ENCODE measurements at regions of chr7 and their contacts with region 1.

Region 1: DNA sequence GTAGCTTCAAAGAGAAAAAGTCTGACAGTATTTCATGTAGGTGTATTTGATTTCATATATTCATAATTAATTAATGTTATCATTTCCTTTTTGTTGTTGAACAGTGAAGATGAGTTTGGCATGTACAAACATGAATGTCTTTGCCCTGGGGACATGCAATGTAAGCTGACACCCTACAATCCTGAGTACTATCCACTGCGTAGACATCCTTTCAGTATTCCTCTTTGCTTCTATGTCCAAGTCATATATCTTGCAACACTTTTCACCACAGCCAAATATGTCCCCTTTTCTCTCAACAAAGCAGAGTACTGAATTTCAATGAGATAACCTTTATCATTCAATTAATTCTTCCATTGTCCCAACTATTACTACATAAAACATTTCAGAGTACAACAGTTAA is 93.6 kb downstream of the GPR37 start:
- DNase-seq: no peak
- ATAC-seq: no peak
- H3K4me3 ChIP-seq: no peak overlapping the region
- H3K27ac ChIP-seq: no peak overlapping the region
- H3K4me1 ChIP-seq: no peaks in the 10 kb centered on the region
- H3K27me3 ChIP-seq: no peaks in the 10 kb centered on the region
- CTCF ChIP-seq: no peak
- EP300 ChIP-seq: no peak
- POLR2A ChIP-seq: no peak
- RAD21 ChIP-seq: no peak

Region 2: GRCh38 chr7:124399941-124400340 is 272.1 kb before region 1 on chr7:
- CTCF ChIA-PET with region 1: no interaction called
- POLR2A ChIA-PET with region 1: no interaction called
- in situ Hi-C with region 1: no loop called
- intact Hi-C with region 1: no loop called
- DNase-seq: no peak
- ATAC-seq: no peak
- H3K4me3 ChIP-seq: no peak overlapping the region
- H3K27ac ChIP-seq: no peak overlapping the region
- H3K4me1 ChIP-seq: no peaks in the 10 kb centered on the region
- H3K27me3 ChIP-seq: no peaks in the 10 kb centered on the region
- CTCF ChIP-seq: no peak
- EP300 ChIP-seq: no peak
- POLR2A ChIP-seq: no peak
- RAD21 ChIP-seq: no peak

Region 3: GRCh38 chr7:124603066-124603465 is 68.9 kb before region 1 on chr7:
- CTCF ChIA-PET with region 1: no interaction called
- POLR2A ChIA-PET with region 1: no interaction called
- in situ Hi-C with region 1: no loop called
- intact Hi-C with region 1: loop called (anchors 10 kb)
- DNase-seq: no peak
- ATAC-seq: no peak
- H3K4me3 ChIP-seq: no peak overlapping the region
- H3K27ac ChIP-seq: no peak overlapping the region
- H3K4me1 ChIP-seq: no peaks in the 10 kb centered on the region
- H3K27me3 ChIP-seq: no peaks in the 10 kb centered on the region
- CTCF ChIP-seq: no peak
- EP300 ChIP-seq: no peak
- POLR2A ChIP-seq: no peak
- RAD21 ChIP-seq: no peak

Region 4: GRCh38 chr7:124635416-124635815 is 36.6 kb before region 1 on chr7:
- CTCF ChIA-PET with region 1: no interaction called
- POLR2A ChIA-PET with region 1: no interaction called
- in situ Hi-C with region 1: no loop called
- intact Hi-C with region 1: loop called (anchors 5 kb)
- DNase-seq: no peak
- ATAC-seq: no peak
- H3K4me3 ChIP-seq: no peak overlapping the region
- H3K27ac ChIP-seq: no peak overlapping the region
- H3K4me1 ChIP-seq: no peaks in the 10 kb centered on the region
- H3K27me3 ChIP-seq: no peaks in the 10 kb centered on the region
- CTCF ChIP-seq: no peak
- EP300 ChIP-seq: no peak
- POLR2A ChIP-seq: no peak
- RAD21 ChIP-seq: no peak

Region 5: GRCh38 chr7:124752310-124752709 is 80.3 kb after region 1 on chr7:
- CTCF ChIA-PET with region 1: no interaction called
- POLR2A ChIA-PET with region 1: no interaction called
- in situ Hi-C with region 1: no loop called
- intact Hi-C with region 1: no loop called
- DNase-seq: no peak
- ATAC-seq: no peak
- H3K4me3 ChIP-seq: no peak overlapping the region
- H3K27ac ChIP-seq: no peak overlapping the region
- H3K4me1 ChIP-seq: no peaks in the 10 kb centered on the region
- H3K27me3 ChIP-seq: no peaks in the 10 kb centered on the region
- CTCF ChIP-seq: no peak
- EP300 ChIP-seq: no peak
- POLR2A ChIP-seq: no peak
- RAD21 ChIP-seq: no peak

Region 6: GRCh38 chr7:124881981-124882380 is 210.0 kb after region 1 on chr7:
- CTCF ChIA-PET with region 1: no interaction called
- POLR2A ChIA-PET with region 1: no interaction called
- in situ Hi-C with region 1: no loop called
- intact Hi-C with region 1: no loop called
- DNase-seq: no peak
- ATAC-seq: no peak
- H3K4me3 ChIP-seq: no peak overlapping the region
- H3K27ac ChIP-seq: no peak overlapping the region
- H3K4me1 ChIP-seq: no peaks in the 10 kb centered on the region
- H3K27me3 ChIP-seq: no peaks in the 10 kb centered on the region
- CTCF ChIP-seq: no peak
- EP300 ChIP-seq: no peak
- POLR2A ChIP-seq: no peak
- RAD21 ChIP-seq: no peak

Measured in K562 (cell line).